ENCODE measurements at regions of chr5 and their contacts with region 1.

Region 1: GRCh38 chr5:40688127-40688761 is 8.5 kb downstream of the PTGER4 start:
- DNase-seq: peak; percentile 76
- H3K4me3 Mint-ChIP-seq: peak overlapping the region; percentile 76
- H3K27ac Mint-ChIP-seq: peak overlapping the region; percentile 73
- H3K4me1 Mint-ChIP-seq: peaks cover 70% of the 10 kb centered on the region
- H3K27me3 Mint-ChIP-seq: no peaks in the 10 kb centered on the region

Region 2: GRCh38 chr5:39714036-39714698 is 974.1 kb before region 1 on chr5:
- intact Hi-C with region 1: loop called (anchors 1 kb)
- DNase-seq: no peak
- H3K4me3 Mint-ChIP-seq: no peak overlapping the region
- H3K27ac Mint-ChIP-seq: no peak overlapping the region
- H3K4me1 Mint-ChIP-seq: no peaks in the 10 kb centered on the region
- H3K27me3 Mint-ChIP-seq: peaks cover 10% of the 10 kb centered on the region

Region 3: GRCh38 chr5:40021007-40021406 is 667.2 kb before region 1 on chr5:
- intact Hi-C with region 1: loop called (anchors 2 kb)
- DNase-seq: no peak
- H3K4me3 Mint-ChIP-seq: no peak overlapping the region
- H3K27ac Mint-ChIP-seq: no peak overlapping the region
- H3K4me1 Mint-ChIP-seq: peaks cover 1% of the 10 kb centered on the region
- H3K27me3 Mint-ChIP-seq: peaks cover 5% of the 10 kb centered on the region

Region 4: GRCh38 chr5:40277161-40277906 is 410.9 kb before region 1 on chr5:
- intact Hi-C with region 1: loop called (anchors 1 kb)
- DNase-seq: peak; percentile 22
- H3K4me3 Mint-ChIP-seq: peak overlapping the region; percentile 5
- H3K27ac Mint-ChIP-seq: peak overlapping the region; percentile 87
- H3K4me1 Mint-ChIP-seq: peaks cover 53% of the 10 kb centered on the region
- H3K27me3 Mint-ChIP-seq: no peaks in the 10 kb centered on the region

Region 5: DNA sequence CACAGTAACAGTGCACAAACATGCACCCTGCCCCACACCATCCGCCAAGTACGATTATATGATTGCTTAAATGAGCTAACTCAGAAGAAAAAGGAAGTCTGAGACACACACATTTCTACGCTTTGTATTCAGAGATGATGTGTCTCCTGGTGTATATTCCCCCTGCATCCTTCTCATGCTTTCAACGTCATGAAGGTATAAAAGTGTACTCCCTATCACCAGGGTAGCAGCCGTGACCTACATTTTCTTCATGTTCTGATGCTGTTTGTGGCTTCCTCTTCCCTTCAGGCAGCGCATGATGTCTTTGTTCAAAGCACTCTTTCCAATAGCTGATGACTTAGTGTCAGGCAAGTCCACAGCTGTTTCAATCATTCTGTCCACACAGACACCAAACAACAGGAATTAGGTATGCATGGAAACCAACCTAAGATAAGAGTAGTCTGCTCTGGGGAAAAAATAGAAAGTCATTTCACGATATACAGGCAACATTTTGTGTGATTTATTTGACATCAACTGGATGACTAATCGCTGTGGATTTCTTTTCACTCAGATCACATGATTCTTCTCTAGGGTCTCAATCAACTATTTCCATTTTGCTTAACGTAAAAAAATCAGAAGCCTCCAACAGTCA is 277.9 kb before region 1 on chr5:
- intact Hi-C with region 1: loop called (anchors 1 kb)
- DNase-seq: peak; percentile 65
- H3K4me3 Mint-ChIP-seq: peak overlapping the region; percentile 66
- H3K27ac Mint-ChIP-seq: peak overlapping the region; percentile 90
- H3K4me1 Mint-ChIP-seq: peaks cover 58% of the 10 kb centered on the region
- H3K27me3 Mint-ChIP-seq: no peaks in the 10 kb centered on the region

Region 6: GRCh38 chr5:40672425-40672824 is 15.8 kb before region 1 on chr5:
- intact Hi-C with region 1: no loop called
- DNase-seq: no peak
- H3K4me3 Mint-ChIP-seq: no peak overlapping the region
- H3K27ac Mint-ChIP-seq: no peak overlapping the region
- H3K4me1 Mint-ChIP-seq: peaks cover 74% of the 10 kb centered on the region
- H3K27me3 Mint-ChIP-seq: peaks cover 2% of the 10 kb centered on the region

Region 7: DNA sequence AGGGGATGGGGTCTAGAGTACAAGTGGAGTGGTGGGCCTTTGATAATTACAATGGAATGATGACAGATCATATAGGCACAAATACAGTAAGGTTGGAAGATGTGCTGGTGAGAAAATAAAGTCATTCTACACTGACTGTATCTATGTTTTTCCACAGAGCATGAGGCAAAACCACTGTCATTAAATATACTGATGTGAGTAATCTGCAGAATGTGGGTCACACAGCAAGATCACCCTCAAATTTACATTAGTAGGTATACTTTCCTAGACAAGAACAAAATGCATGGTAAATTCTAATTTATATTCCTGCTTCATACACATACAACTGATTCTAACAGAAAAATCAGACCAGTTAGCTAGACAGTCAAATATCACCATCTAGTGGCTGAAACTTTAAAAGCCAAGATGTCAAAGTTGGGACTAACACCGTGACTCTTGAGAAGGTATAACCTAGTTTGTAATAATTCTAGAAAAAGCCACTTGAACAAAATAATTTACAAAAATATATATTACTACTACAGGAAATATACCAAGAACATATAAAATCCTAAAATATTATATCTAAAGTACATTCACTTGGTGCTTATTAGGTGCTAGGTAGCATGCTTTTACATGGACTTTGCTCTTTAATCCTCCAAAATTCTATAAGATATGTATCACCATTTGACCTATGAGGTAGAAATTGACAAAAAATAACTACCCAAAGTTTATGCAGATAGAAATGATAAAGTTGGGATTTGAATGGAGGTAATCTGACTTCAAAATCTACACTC is 48.0 kb after region 1 on chr5:
- intact Hi-C with region 1: loop called (anchors 1 kb)
- DNase-seq: no peak
- H3K4me3 Mint-ChIP-seq: no peak overlapping the region
- H3K27ac Mint-ChIP-seq: peak overlapping the region; percentile 17
- H3K4me1 Mint-ChIP-seq: peaks cover 28% of the 10 kb centered on the region
- H3K27me3 Mint-ChIP-seq: no peaks in the 10 kb centered on the region

Region 8: GRCh38 chr5:40798012-40798855 is 110.0 kb after region 1 on chr5 and contains the start of gene PRKAA1:
- intact Hi-C with region 1: no loop called
- DNase-seq: peak; percentile 86
- H3K4me3 Mint-ChIP-seq: peak within 1 kb of the TSS; percentile 88
- H3K27ac Mint-ChIP-seq: peak within 1 kb of the TSS; percentile 90
- H3K4me1 Mint-ChIP-seq: peaks cover 32% of the 10 kb centered on the region
- H3K27me3 Mint-ChIP-seq: peaks cover 9% of the 10 kb centered on the region
- total RNA-seq, gene PRKAA1: 61.2 and 61.7 TPM in 2 replicates

Measured in activated T-helper 2 cell treated with anti-CD3 and anti-CD28 coated beads, Interferon-gamma antibody, Interleukin-2, Interleukin-4, amounts not matched to agents 10 μg/mL and 5 μg/mL and 100 μg/mL, durations not matched to agents 14 hours and 24 hours and 36 hours (primary cell).